IMR-90 (cell line): ENCODE measurements at regions of chr20 and their contacts with region 1.

Region 1: GRCh38 chr20:3059489-3059888 is 11.9 kb upstream of the OXT start:
- DNase-seq: no peak
- ATAC-seq: no peak
- H3K4me3 ChIP-seq: no peak overlapping the region
- H3K27ac ChIP-seq: no peak overlapping the region
- H3K4me1 ChIP-seq: no peaks in the 10 kb centered on the region
- H3K27me3 ChIP-seq: no peaks in the 10 kb centered on the region
- CTCF ChIP-seq: no peak
- POLR2A ChIP-seq: no peak
- RAD21 ChIP-seq: no peak

Region 2: DNA sequence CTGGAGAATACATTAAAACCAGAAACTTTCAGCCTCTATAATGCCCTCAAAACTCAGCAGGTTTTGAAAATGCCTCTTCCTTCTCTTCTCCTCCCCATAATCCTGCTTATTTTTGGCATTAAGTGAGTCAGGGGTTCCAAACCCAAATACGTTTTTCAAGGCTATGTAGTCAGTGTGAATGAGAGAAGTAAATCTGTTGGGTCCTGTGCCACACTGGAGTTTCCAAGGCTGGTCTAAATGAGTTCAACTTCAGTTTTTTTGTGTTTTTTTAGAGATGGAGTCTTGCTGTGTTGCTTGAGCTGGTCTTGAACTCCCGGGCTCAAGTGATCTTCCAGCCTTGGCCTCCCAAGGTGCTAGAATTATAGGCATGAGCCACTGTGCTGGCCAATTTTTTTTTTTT is 165.3 kb before region 1 on chr20:
- CTCF ChIA-PET with region 1: interaction called, 12 read pairs
- POLR2A ChIA-PET with region 1: no interaction called
- dilution Hi-C with region 1: no loop called
- in situ Hi-C with region 1: no loop called
- intact Hi-C with region 1: no loop called
- DNase-seq: no peak
- ATAC-seq: no peak
- H3K4me3 ChIP-seq: no peak overlapping the region
- H3K27ac ChIP-seq: no peak overlapping the region
- H3K4me1 ChIP-seq: no peaks in the 10 kb centered on the region; the same call in 1 of the 2 replicates
- H3K27me3 ChIP-seq: no peaks in the 10 kb centered on the region
- CTCF ChIP-seq: no peak
- POLR2A ChIP-seq: no peak
- RAD21 ChIP-seq: no peak

Region 3: DNA sequence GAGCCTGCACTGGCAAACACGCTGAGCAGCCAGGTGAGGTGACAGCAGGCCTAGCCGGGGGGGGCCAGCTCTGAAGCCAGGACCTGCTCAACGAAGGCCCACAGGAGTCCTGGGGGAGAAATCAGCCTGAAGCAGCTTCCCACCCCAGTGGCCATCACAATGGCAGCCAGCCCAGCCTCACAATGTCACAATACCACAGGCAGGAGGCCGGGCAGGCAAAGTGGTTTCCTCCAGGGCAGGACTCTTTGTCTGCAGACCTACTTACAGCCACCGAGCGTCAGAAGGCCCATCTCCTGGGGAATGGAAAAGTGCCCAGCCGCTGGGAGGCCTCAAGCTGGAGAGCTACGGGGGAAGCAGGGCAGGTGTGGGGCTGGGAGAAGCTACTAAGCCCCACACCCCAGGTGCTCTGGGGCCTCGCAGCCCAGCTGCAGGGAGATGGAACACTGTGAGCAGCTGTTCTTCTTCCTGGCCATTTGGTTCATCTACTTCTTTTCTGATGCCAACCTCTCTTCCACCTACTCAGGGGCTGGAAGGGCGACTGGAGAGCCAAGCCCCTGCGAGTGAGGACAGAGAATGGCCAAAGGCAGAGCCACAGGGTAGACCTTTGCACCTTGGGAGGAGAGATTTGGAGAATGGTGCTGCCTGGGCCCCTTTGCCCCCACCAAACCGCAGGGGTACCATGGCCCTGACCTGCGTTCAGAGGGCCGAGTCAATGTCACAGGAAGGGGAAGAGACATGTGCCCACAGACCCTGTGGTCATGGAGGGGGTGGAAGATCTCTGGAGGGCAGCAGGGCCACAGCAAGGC is 47.4 kb after region 1 on chr20:
- CTCF ChIA-PET with region 1: interaction called, 3 read pairs
- POLR2A ChIA-PET with region 1: no interaction called
- dilution Hi-C with region 1: no loop called
- in situ Hi-C with region 1: loop called (anchors 5 kb)
- intact Hi-C with region 1: no loop called
- DNase-seq: no peak
- ATAC-seq: no peak
- H3K4me3 ChIP-seq: no peak overlapping the region
- H3K27ac ChIP-seq: no peak overlapping the region
- H3K4me1 ChIP-seq: no peaks in the 10 kb centered on the region
- H3K27me3 ChIP-seq: no peaks in the 10 kb centered on the region
- CTCF ChIP-seq: no peak
- POLR2A ChIP-seq: no peak
- RAD21 ChIP-seq: no peak